Activated CD8-positive, alpha-beta memory T cell treated with anti-CD3 and anti-CD28 coated beads, Interleukin-2, amount 10 ng/mL, durations not matched to agents 7 days and 5 days (primary cell): ENCODE measurements at regions of chr11 and their contacts with region 1.

Region 1: GRCh38 chr11:114262681-114263512 is 33.3 kb upstream of the NNMT start:
- DNase-seq: peak; percentile 50
- ATAC-seq: peak; percentile 65
- H3K4me3 Mint-ChIP-seq: no peak overlapping the region
- H3K27ac Mint-ChIP-seq: no peak overlapping the region
- H3K4me1 Mint-ChIP-seq: no peaks in the 10 kb centered on the region
- H3K27me3 Mint-ChIP-seq: no peaks in the 10 kb centered on the region

Region 2: GRCh38 chr11:114015119-114015518 is 247.8 kb before region 1 on chr11:
- CTCF ChIA-PET with region 1: interaction called, 13 read pairs
- DNase-seq: no peak
- ATAC-seq: no peak
- H3K4me3 Mint-ChIP-seq: no peak overlapping the region
- H3K27ac Mint-ChIP-seq: no peak overlapping the region
- H3K4me1 Mint-ChIP-seq: no peaks in the 10 kb centered on the region
- H3K27me3 Mint-ChIP-seq: peaks cover 8% of the 10 kb centered on the region

Region 3: DNA sequence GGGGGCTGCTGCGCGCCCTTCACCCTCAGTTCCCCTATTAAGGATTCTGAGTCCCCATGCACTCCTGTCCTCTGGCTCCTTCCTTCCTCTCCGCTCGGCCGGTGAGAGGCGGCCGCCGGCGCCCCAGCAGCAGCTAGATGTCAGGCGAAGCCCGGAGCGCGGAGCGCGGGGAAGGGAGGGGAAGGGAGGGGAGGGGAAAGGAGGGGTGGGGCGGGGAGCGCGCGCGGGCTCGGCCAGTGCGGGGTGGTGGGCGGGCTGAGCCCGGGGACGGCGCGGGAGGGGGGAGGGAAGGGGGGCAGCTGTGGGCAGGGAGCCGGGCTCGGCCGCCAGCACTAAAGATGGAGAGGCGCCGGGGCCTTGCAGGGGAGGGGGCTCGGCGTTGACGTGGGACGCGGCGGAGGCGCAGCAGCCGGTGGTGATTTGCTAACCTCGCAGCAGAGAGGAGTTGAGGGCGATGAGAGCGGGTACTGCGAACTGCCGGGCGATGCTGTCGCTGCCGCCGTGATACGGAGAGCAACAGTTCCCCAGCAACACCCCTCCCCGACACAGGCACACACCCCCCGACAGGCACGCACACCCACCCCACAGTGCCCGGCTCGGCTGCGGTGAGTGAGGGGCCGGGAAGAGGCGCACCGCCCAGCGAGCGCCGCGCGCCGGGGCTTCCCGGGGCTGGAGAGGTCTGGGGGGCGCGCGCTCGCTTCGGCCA is 203.5 kb before region 1 on chr11 and contains the start of gene ZBTB16:
- CTCF ChIA-PET with region 1: interaction called, 22 read pairs
- DNase-seq: no peak
- ATAC-seq: peak; percentile 54
- H3K4me3 Mint-ChIP-seq: peak within 1 kb of the TSS; percentile 74
- H3K27ac Mint-ChIP-seq: peak within 1 kb of the TSS; percentile 45
- H3K4me1 Mint-ChIP-seq: peaks cover 15% of the 10 kb centered on the region
- H3K27me3 Mint-ChIP-seq: peaks cover 75% of the 10 kb centered on the region
- total RNA-seq, gene ZBTB16: 3.2 to 3.9 TPM

Region 4: GRCh38 chr11:114166897-114167323 is 96.0 kb before region 1 on chr11:
- CTCF ChIA-PET with region 1: interaction called, 12 read pairs
- DNase-seq: no peak
- ATAC-seq: peak; percentile 77
- H3K4me3 Mint-ChIP-seq: peak overlapping the region; percentile 9
- H3K27ac Mint-ChIP-seq: peak overlapping the region; percentile 80
- H3K4me1 Mint-ChIP-seq: peaks cover 51% of the 10 kb centered on the region
- H3K27me3 Mint-ChIP-seq: no peaks in the 10 kb centered on the region

Region 5: DNA sequence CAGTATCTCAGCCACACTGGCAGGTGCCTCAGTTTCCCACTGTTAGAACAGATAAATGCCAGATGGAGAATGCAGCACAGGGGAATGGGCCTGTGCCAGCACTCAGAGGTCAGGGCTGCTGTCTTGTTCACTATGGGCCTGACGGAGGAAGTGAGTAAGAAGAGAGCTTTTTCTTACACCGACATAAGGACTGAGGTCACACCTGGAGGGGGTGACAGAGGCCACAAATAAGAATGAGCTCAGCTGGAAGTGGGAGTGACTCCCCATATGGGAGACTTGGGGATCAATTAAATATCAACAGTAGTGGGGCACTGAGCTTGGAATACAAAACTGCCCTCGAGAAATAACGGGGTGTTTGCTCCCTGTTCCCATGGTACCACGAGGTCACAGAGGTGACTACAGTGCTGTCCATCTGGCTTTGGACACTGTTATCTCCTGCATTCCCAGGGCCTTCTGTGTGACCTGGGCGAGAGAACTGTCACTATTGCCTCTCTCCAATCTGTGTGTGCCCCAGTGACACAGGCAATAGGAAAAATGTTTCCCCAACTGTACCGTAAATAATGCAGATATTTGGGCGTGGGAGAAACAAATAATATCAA is 60.8 kb before region 1 on chr11:
- CTCF ChIA-PET with region 1: interaction called, 26 read pairs
- DNase-seq: no peak
- ATAC-seq: peak; percentile 75
- H3K4me3 Mint-ChIP-seq: no peak overlapping the region
- H3K27ac Mint-ChIP-seq: peak overlapping the region; percentile 34
- H3K4me1 Mint-ChIP-seq: peaks cover 12% of the 10 kb centered on the region
- H3K27me3 Mint-ChIP-seq: no peaks in the 10 kb centered on the region

Region 6: GRCh38 chr11:114250993-114251814 is 11.7 kb before region 1 on chr11:
- CTCF ChIA-PET with region 1: interaction called, 21 read pairs
- DNase-seq: no peak
- ATAC-seq: no peak
- H3K4me3 Mint-ChIP-seq: no peak overlapping the region
- H3K27ac Mint-ChIP-seq: no peak overlapping the region
- H3K4me1 Mint-ChIP-seq: no peaks in the 10 kb centered on the region
- H3K27me3 Mint-ChIP-seq: no peaks in the 10 kb centered on the region